Posterior cingulate gyrus (tissue), 11 donors: ENCODE measurements at regions of chr2 and their contacts with region 1.

Region 1: DNA sequence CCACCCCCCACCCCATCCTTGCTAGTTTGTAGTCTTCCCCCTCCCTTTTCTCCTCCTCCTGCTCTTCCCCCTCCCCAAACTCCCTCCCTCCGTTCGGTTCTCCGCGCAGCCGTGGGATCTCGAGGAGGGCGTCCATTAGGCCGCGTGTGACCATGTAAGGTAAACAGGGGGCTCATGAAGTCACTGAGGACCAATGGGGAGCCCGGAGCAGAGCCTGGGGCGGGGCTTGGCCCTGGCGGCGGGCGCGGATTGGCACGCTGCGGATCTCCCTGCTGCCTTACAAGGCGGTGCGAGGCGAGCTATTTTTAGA is 246 bp upstream of the KLF7 start:
- DNase-seq: peak; percentile 99 to 100 (median 100)

Region 2: DNA sequence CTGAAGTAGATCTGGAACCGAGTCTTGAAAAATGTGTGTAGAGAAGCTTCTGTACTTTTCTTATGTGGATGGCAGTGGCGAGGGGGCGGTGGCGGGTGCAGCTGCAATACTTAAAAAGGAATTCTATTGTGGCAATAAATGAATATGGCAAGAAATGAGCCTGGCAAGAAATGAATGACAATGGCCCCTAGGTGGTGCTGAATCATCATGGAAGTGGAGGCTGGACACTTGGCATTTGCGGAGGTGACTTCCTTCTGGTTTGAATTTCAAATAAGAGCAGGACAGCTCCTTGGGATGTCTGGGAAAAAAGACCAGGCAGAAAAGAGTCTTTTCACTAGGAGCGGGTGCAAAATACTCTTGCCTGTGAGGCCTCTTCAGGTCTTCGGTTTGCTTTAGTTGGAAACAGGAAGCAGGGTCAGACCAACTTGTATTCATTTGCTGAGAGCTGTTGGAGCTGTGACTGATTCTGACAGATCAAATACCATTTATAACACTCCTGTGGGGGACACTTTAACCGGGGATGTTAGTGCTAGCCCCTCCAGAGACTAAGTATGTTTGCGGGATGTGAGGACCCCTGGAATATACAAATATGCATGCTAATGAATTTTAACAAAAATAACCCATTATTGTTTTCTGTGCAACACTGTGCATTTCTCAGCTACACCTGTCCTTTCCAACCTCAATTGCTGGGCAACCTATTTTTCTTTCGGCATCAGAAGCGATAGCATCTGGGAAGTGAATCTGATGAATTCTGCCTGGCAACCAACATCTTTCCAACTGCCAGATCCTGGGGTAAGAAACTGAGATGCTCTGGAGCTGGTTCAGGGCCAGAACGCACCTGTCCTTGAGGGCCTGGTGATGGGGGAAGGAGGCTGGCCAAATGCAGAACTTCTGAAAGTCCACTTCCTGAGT is 365.2 kb before region 1 on chr2:
- intact Hi-C with region 1: loop called (anchors 5 kb)
- DNase-seq: peak; percentile 59 to 95 (median 71)

Region 3: DNA sequence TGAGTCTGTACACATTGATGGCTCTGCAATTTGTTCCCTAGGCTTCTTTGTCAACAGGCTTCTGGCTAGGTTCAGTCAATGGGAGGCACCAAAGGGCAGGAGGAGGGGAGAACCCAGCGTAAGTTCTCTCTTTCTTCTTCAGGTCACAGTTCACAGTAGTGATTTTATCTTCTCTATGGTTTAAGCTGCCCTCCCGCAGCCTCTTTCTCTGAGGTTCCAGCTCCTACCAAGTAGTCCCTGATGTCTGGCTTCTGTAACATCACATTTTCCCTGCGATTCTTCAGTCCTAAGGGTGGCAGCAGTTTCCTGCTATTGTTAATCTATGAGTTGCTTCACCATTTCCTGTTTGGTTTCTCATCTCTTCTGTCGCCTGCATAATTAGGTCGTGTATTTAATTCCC is 119.3 kb before region 1 on chr2:
- intact Hi-C with region 1: loop called (anchors 10 kb)
- DNase-seq: peak in 2 of 10 donors; percentile 32 to 66

Region 4: GRCh38 chr2:207115715-207116364 is 50.2 kb before region 1 on chr2:
- intact Hi-C with region 1: loop called (anchors 10 kb)
- DNase-seq: peak in 6 of 10 donors; percentile 26 to 91 (median 48)

Region 5: GRCh38 chr2:207473049-207473930 is 307.3 kb after region 1 on chr2:
- intact Hi-C with region 1: loop called (anchors 5 kb)
- DNase-seq: peak in 8 of 10 donors; percentile 53 to 93 (median 68)